PC-9 (cell line): ENCODE measurements at regions of chr1 and their contacts with region 1.

Region 1: DNA sequence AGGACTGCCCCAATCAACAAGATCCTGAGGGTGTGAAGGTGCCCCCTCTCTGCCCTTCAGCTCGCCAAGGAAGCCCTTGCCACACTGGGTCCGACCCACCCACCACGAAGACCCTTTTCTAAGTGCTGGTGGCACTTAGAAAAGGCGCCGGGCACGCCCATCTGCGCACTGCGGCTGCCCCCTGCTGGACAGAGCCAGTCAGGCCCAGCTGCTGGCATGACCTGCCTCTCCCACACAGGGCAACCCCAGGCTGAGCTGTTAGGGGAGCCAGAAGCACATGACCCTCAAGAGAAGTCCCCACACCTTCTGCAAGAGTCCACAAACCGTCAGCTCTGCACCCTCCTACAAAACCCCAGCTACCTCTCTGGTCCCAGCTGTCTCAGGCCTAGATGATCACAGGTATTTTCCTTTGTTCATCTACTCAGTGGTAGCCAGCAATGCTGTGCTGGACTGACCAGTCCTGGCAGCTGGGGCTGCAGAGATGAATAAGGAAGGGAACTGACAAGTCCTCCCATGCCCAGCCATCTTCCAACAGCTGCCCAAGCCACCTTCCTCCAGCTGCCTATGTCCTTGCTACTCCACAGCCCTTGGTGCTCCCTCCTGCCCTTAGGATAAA is 40.0 kb upstream of the ZC3H12A start:
- DNase-seq: peak in 1 of 2 experiments; percentile 70
- H3K4me3 ChIP-seq: no peak overlapping the region
- H3K27ac ChIP-seq: no peak overlapping the region
- H3K4me1 ChIP-seq: no peaks in the 10 kb centered on the region
- H3K27me3 ChIP-seq: peaks cover 60% of the 10 kb centered on the region
- CTCF ChIP-seq: peak; percentile 98

Region 2: GRCh38 chr1:36553591-36554322 is 880.6 kb before region 1 on chr1:
- CTCF ChIA-PET with region 1: no interaction called
- POLR2A ChIA-PET with region 1: no interaction called
- intact Hi-C with region 1: loop called (anchors 5 kb)
- DNase-seq: peak; percentile 46 to 73
- H3K4me3 ChIP-seq: no peak overlapping the region
- H3K27ac ChIP-seq: no peak overlapping the region
- H3K4me1 ChIP-seq: no peaks in the 10 kb centered on the region
- H3K27me3 ChIP-seq: peaks cover 87% of the 10 kb centered on the region
- CTCF ChIP-seq: peak; percentile 90

Region 3: DNA sequence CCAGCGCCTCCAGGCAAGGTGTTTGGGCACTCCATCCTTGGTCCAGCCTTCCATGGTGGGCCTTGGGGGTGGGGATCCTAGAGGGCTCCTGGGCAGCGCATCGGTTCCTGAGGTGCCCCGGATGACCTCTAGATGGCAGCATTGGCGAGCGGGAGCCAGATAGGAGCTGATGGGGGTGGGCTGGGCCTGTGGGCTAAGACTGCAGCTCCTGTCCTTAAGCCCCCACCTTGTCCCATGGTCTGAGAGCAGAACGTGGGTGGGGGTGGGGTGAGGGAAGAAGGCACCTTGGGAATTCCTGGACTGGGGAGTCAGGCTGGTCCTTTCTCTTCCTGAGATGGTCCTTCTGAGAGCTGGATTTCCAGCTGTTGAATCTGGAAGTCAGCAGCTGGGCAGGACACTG is 858.3 kb before region 1 on chr1:
- CTCF ChIA-PET with region 1: interaction called, 8 read pairs
- POLR2A ChIA-PET with region 1: no interaction called
- intact Hi-C with region 1: loop called (anchors 1 kb)
- DNase-seq: peak; percentile 48 to 64
- H3K4me3 ChIP-seq: no peak overlapping the region
- H3K27ac ChIP-seq: no peak overlapping the region
- H3K4me1 ChIP-seq: no peaks in the 10 kb centered on the region
- H3K27me3 ChIP-seq: peaks cover 30% of the 10 kb centered on the region
- CTCF ChIP-seq: peak; percentile 87

Region 4: DNA sequence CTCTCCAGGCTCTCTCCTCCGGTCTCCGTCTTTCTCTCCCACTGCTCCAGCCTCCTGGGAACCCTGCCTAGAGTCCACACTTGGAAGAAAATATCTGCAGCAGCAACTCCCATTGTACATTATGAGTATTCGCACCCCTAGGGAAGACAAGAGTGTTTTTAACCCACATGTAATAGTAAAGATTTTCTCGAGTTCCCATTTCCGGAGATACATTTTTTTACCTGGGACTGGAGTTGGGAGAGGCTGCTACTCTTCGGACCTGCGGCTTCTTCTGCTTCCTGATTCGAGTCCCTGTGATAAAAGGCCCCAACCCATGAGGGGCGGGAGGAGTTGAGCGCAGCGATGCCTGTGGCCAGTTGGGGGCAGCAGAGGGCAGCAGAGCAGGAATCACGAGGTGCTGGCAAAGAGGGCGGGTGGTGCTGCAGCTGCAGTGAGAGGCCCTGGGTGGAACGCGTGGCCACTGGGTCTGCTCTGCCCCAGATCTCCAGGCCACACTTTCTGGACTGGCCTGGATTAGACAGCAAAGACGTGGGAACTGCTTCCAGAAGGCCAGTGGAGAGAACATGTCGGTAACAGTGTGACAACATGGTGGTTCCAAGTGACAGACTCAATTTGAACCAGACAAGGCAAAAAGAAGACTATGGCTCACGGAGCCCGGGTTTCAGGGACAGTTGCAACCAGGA is 730.7 kb before region 1 on chr1:
- CTCF ChIA-PET with region 1: no interaction called
- POLR2A ChIA-PET with region 1: no interaction called
- intact Hi-C with region 1: loop called (anchors 1 kb)
- DNase-seq: peak; percentile 53 to 68
- H3K4me3 ChIP-seq: no peak overlapping the region
- H3K27ac ChIP-seq: no peak overlapping the region
- H3K4me1 ChIP-seq: peaks cover 17% of the 10 kb centered on the region; the same call in 1 of the 2 replicates
- H3K27me3 ChIP-seq: peaks cover 72% of the 10 kb centered on the region
- CTCF ChIP-seq: peak; percentile 87

Region 5: DNA sequence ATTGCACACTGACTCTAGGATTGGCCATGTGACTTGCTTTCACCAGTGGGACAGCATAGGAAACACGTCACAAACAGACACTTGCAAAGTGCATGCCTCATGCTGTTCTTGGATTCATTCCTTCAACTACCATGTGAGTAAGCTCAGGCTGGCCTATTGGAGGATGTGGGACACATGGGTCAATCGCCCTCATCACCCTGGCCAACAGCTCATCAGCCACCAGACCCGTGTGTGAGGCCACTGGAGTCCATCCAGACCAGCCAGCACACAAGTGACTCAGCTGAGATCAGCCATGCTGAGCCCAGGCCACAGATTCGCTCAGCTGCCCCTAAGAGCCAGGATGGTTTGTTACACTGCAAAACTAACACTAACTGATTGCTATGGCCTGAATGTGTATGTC is 184.0 kb before region 1 on chr1:
- CTCF ChIA-PET with region 1: no interaction called
- POLR2A ChIA-PET with region 1: no interaction called
- intact Hi-C with region 1: no loop called
- DNase-seq: no peak
- H3K4me3 ChIP-seq: no peak overlapping the region
- H3K27ac ChIP-seq: no peak overlapping the region
- H3K4me1 ChIP-seq: no peaks in the 10 kb centered on the region
- H3K27me3 ChIP-seq: peaks cover 56% of the 10 kb centered on the region
- CTCF ChIP-seq: no peak

Region 6: GRCh38 chr1:37449936-37450335 is 15.5 kb after region 1 on chr1:
- CTCF ChIA-PET with region 1: interaction called, 13 read pairs
- POLR2A ChIA-PET with region 1: no interaction called
- intact Hi-C with region 1: no loop called
- DNase-seq: no peak
- H3K4me3 ChIP-seq: no peak overlapping the region
- H3K27ac ChIP-seq: no peak overlapping the region
- H3K4me1 ChIP-seq: peaks cover 18% of the 10 kb centered on the region
- H3K27me3 ChIP-seq: no peaks in the 10 kb centered on the region
- CTCF ChIP-seq: no peak